Aorta (tissue), 5 donors: ENCODE measurements at regions of chr4 and their contacts with region 1.

Region 1: GRCh38 chr4:87465739-87466366 is 43.5 kb downstream of the NUDT9 start:
- DNase-seq: no peak
- ATAC-seq: no peak
- H3K4me3 ChIP-seq: no peak overlapping the region
- H3K27ac ChIP-seq: no peak overlapping the region
- H3K4me1 ChIP-seq: no peaks in the 10 kb centered on the region
- H3K27me3 ChIP-seq: no peaks in the 10 kb centered on the region

Region 2: DNA sequence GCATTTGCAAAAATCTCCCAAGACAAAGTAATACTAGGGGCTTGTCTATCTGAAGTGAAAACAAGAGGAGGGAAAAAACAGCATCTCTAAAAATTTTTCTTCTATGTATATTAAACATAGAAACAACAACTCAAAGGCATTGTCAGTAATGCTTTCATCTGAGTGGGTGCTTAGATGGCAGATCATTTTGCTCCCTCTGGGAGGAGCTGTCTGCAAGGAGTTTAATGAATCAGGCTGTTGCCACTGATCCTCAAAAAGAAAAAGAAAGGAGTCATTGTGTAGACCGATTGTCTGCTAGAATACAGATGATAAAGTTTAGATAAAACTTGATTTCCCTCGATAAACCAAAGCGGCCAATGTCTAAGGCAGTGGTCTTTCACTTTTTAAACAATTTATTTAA is 195.7 kb before region 1 on chr4:
- intact Hi-C with region 1: loop called in 1 of 2 experiments (anchors 5 kb)
- DNase-seq: no peak
- ATAC-seq: no peak
- H3K4me3 ChIP-seq: no peak overlapping the region
- H3K27ac ChIP-seq: no peak overlapping the region
- H3K4me1 ChIP-seq: peaks cover 0 to 2% of the 10 kb centered on the region in 2 donors
- H3K27me3 ChIP-seq: no peaks in the 10 kb centered on the region

Region 3: GRCh38 chr4:87354168-87355102 is 111.4 kb before region 1 on chr4:
- intact Hi-C with region 1: loop called in 1 of 2 experiments (anchors 5 kb)
- DNase-seq: no peak
- ATAC-seq: peak; percentile 63
- H3K4me3 ChIP-seq: no peak overlapping the region
- H3K27ac ChIP-seq: peak overlapping the region in 1 of 2 donors; percentile 57
- H3K4me1 ChIP-seq: no peaks in the 10 kb centered on the region
- H3K27me3 ChIP-seq: no peaks in the 10 kb centered on the region

Region 4: GRCh38 chr4:87375719-87376291 is 90.0 kb before region 1 on chr4:
- intact Hi-C with region 1: loop called (anchors 2 to 5 kb)
- DNase-seq: no peak
- ATAC-seq: peak; percentile 88
- H3K4me3 ChIP-seq: no peak overlapping the region
- H3K27ac ChIP-seq: no peak overlapping the region
- H3K4me1 ChIP-seq: no peaks in the 10 kb centered on the region
- H3K27me3 ChIP-seq: no peaks in the 10 kb centered on the region

Region 5: GRCh38 chr4:87758270-87758669 is 292.4 kb after region 1 on chr4:
- intact Hi-C with region 1: no loop called
- DNase-seq: no peak
- ATAC-seq: no peak
- H3K4me3 ChIP-seq: no peak overlapping the region
- H3K27ac ChIP-seq: no peak overlapping the region
- H3K4me1 ChIP-seq: no peaks in the 10 kb centered on the region
- H3K27me3 ChIP-seq: no peaks in the 10 kb centered on the region